ENCODE measurements at regions of chr9 and their contacts with region 1.

Region 1: DNA sequence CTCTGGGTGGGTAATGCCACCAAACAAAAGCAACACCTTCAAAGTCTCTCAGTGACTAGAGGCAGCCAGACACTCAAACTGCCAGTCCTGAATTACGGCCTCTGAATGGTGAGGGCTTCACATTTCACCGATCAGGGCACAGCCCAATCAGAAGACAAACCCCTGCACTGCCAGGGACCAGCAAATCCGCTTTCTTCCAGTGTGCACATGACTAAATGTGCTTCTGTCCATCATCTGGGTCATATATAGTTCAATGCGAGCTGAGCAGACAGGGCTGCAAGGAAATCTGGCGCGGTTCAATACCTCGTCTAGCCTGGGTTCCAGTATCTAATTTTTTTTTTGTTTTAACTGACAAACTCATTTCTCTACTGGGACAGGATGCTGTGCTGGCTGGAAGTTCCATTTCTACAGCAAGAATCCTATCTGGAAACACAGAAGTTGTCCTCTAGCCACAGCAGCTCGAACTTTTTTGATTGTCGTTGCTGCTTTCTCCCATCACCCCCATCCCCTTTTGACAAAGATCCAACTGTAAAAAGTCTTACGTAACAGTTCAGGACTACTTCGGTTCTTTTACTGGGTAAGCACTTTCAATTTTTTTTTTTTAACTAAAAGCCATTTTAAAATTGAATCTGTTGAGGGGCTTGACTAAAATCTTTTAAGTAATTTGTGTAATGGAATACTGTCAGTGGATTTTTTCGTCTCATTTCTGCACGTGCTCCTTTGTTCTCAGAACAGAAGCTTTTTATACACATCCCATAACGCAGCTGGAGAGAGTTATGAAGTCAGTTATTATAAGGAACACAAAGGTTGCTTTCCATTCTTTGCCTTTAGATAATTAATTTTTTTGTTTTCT is 112.7 kb downstream of the NR6A1 start:
- DNase-seq: peak; percentile 87
- ATAC-seq: peak; percentile 93
- H3K4me3 ChIP-seq: peak overlapping the region; percentile 72
- H3K27ac ChIP-seq: peak overlapping the region; percentile 78
- H3K4me1 ChIP-seq: peaks cover 24% of the 10 kb centered on the region; the same call in 1 of the 2 replicates
- H3K27me3 ChIP-seq: no peaks in the 10 kb centered on the region
- CTCF ChIP-seq: no peak

Region 2: GRCh38 chr9:124617471-124618141 is 40.8 kb before region 1 on chr9:
- CTCF ChIA-PET with region 1: no interaction called
- POLR2A ChIA-PET with region 1: no interaction called
- intact Hi-C with region 1: loop called (anchors 2 kb)
- DNase-seq: peak; percentile 78
- ATAC-seq: peak; percentile 96
- H3K4me3 ChIP-seq: no peak overlapping the region
- H3K27ac ChIP-seq: no peak overlapping the region
- H3K4me1 ChIP-seq: peaks cover 11% of the 10 kb centered on the region
- H3K27me3 ChIP-seq: no peaks in the 10 kb centered on the region
- CTCF ChIP-seq: peak; percentile 88

Region 3: GRCh38 chr9:124812401-124813016 is 154.1 kb after region 1 on chr9:
- CTCF ChIA-PET with region 1: no interaction called
- POLR2A ChIA-PET with region 1: interaction called, 11 read pairs
- intact Hi-C with region 1: no loop called
- DNase-seq: peak; percentile 84
- ATAC-seq: peak; percentile 84
- H3K4me3 ChIP-seq: no peak overlapping the region
- H3K27ac ChIP-seq: peak overlapping the region; percentile 88
- H3K4me1 ChIP-seq: peaks cover 34% of the 10 kb centered on the region
- H3K27me3 ChIP-seq: no peaks in the 10 kb centered on the region
- CTCF ChIP-seq: no peak

Region 4: GRCh38 chr9:125241000-125241862 is 582.8 kb after region 1 on chr9 and contains the start of gene HSPA5:
- CTCF ChIA-PET with region 1: no interaction called
- POLR2A ChIA-PET with region 1: interaction called, 10 read pairs
- intact Hi-C with region 1: no loop called
- DNase-seq: peak; percentile 97
- ATAC-seq: peak; percentile 80
- H3K4me3 ChIP-seq: peak within 1 kb of the TSS; percentile 93
- H3K27ac ChIP-seq: peak within 1 kb of the TSS; percentile 72
- H3K4me1 ChIP-seq: peaks cover 43% of the 10 kb centered on the region
- H3K27me3 ChIP-seq: no peaks in the 10 kb centered on the region
- CTCF ChIP-seq: no peak
- total RNA-seq, gene HSPA5: 112 and 142 TPM in 2 replicates